Activated CD4-positive, alpha-beta T cell treated with anti-CD3 and anti-CD28 coated beads for 36 hours (primary cell): ENCODE measurements at regions of chr9 and their contacts with region 1.

Region 1: GRCh38 chr9:86282077-86282978 is at the start of gene ISCA1:
- DNase-seq: peak; percentile 99
- ATAC-seq: peak; percentile 86
- H3K4me3 Mint-ChIP-seq: peak within 1 kb of the TSS; percentile 82
- H3K27ac Mint-ChIP-seq: peak within 1 kb of the TSS; percentile 95
- H3K4me1 Mint-ChIP-seq: peaks cover 42% of the 10 kb centered on the region
- H3K27me3 Mint-ChIP-seq: no peaks in the 10 kb centered on the region
- total RNA-seq, gene ISCA1: 27.1 to 27.4 TPM

Region 2: DNA sequence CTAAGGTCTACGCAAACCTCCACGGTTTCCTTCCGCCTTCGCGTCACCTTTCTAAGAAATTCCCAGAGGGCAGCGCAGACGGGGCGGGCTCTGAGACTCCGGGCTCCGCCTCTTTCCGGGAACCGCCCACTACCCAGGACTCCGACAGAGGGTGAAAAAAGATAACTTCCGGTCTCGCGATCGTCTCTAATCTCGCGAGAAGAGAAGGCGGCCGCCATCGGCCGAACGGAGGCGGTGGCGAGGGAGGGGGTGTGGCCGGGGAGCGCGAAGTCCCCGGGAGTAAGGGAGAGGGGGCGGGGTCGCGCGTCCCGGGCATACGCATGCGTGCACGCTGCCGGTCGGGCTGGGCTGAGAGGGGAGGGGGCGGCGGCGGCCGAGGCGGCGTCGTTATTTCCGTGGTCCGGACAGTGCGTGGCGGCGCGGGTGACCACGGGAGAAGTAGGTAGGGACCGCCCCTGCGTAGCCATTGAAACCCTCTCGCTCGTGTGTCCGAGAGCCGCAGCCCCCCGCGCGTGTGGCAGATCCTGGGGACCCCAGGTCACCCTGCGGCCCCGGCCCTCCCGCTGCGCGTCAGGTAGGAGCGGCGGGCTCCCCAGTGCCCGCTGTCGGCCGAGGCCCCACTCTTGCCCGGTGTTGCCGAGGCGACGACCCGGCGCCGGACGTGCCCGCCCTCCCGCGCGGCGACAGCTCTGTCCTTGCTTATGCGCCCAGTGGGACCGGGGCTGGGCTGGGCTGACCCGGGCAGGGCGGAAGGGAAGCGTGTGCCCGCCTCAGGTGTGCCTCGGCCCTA is 341.3 kb before region 1 on chr9 and contains the start of gene NAA35:
- CTCF ChIA-PET with region 1: no interaction called
- POLR2A ChIA-PET with region 1: interaction called, 3 read pairs
- intact Hi-C with region 1: loop called (anchors 1 to 2 kb)
- DNase-seq: peak; percentile 99
- ATAC-seq: peak; percentile 88
- H3K4me3 Mint-ChIP-seq: no peak within 1 kb of the TSS
- H3K27ac Mint-ChIP-seq: peak within 1 kb of the TSS; percentile 95
- H3K4me1 Mint-ChIP-seq: peaks cover 8% of the 10 kb centered on the region
- H3K27me3 Mint-ChIP-seq: no peaks in the 10 kb centered on the region
- total RNA-seq, gene NAA35: 24.9 to 25.8 TPM

Region 3: DNA sequence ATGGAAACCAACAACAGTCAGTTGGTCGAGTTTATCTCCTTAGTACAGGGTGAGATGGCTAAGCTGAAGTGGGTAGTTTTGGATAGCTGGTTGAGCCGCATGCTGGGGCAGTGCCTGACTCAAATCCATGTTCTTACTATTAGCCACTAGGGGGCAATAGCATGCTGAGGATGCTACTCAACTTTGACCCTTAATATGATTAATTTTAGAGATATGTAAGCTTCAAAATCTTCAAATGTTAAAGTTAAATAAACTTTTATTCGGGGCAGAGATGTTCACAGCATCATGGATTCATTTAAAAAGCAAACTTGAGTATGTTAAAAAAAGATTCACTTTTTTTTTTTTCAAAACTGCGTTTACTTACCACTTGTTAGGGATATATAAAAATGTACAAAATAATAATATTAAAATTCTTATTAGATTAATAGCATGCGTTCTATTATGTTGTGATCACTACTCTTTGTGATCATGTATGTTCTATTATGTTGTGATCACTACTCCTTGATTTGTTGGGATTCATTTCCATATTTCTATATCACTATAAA is 79.9 kb before region 1 on chr9:
- CTCF ChIA-PET with region 1: interaction called, 4 read pairs
- POLR2A ChIA-PET with region 1: no interaction called
- intact Hi-C with region 1: loop called in 1 of 2 experiments (anchors 5 kb)
- DNase-seq: peak; percentile 30
- ATAC-seq: peak; percentile 57
- H3K4me3 Mint-ChIP-seq: no peak overlapping the region
- H3K27ac Mint-ChIP-seq: no peak overlapping the region
- H3K4me1 Mint-ChIP-seq: peaks cover 3% of the 10 kb centered on the region
- H3K27me3 Mint-ChIP-seq: peaks cover 6% of the 10 kb centered on the region

Region 4: GRCh38 chr9:86600291-86600690 is 318.0 kb after region 1 on chr9:
- CTCF ChIA-PET with region 1: no interaction called
- POLR2A ChIA-PET with region 1: no interaction called
- intact Hi-C with region 1: no loop called
- DNase-seq: no peak
- ATAC-seq: no peak
- H3K4me3 Mint-ChIP-seq: no peak overlapping the region
- H3K27ac Mint-ChIP-seq: no peak overlapping the region
- H3K4me1 Mint-ChIP-seq: no peaks in the 10 kb centered on the region
- H3K27me3 Mint-ChIP-seq: peaks cover 16% of the 10 kb centered on the region

Region 5: GRCh38 chr9:86948074-86948929 is 666.0 kb after region 1 on chr9:
- CTCF ChIA-PET with region 1: no interaction called
- POLR2A ChIA-PET with region 1: no interaction called
- intact Hi-C with region 1: loop called in 1 of 2 experiments (anchors 2 kb)
- DNase-seq: peak; percentile 85
- ATAC-seq: peak; percentile 55
- H3K4me3 Mint-ChIP-seq: peak overlapping the region; percentile 74
- H3K27ac Mint-ChIP-seq: no peak overlapping the region
- H3K4me1 Mint-ChIP-seq: peaks cover 9% of the 10 kb centered on the region
- H3K27me3 Mint-ChIP-seq: peaks cover 16% of the 10 kb centered on the region